ENCODE measurements at regions of chr9 and their contacts with region 1.

Region 1: DNA sequence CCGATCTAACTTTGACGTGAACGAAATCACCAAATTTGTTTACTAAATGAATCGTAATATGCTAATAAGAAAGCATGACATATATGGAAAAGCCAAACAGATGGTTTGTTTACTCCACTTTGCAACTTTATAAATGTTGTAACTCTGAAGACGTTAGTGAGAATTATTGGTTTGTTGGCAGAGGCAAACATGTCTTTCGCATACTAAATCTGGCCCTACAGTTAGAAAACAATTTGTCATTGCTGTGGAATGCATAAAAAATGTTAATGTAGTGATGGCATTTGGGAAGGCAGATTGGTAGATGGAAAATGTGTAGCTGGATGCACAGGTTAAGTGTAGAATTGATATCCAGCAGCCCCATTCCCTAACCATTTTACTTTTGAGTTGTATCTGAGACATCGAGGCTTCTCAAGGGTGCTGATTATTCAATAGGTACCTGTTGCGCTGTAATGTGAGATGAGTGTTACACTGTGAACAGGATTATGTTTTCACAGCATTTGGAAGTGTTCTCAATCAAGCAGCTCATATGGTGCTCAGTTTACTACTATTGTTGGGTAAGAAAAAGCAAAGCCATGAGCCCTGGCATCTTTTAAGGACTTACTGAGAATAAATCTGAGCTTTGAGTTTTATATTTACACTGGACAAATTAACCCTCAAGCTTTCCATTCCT is 444.8 kb downstream of the BNC2 start:
- DNase-seq: no peak
- H3K4me3 ChIP-seq: no peak overlapping the region
- CTCF ChIP-seq: no peak

Region 2: DNA sequence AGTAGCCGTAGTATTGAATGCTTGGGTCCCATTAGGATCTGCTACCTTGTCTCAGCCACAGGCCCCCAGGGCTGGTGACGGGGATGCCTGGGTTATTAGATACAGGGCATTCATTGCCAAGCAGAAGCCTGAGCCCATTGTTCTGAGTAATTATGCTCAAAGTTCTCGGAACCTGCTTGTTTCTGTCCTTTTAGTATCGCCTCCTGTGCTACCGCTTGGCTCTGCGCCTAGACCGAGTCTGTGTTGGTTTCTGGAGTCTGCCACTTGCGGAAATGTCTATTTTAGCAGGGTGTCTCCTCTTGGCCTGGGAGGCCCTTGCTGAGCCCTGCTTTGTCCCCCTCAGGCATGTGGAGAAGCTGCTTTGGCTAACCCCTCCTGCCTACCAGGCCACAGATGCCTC is 61.4 kb before region 1 on chr9:
- in situ Hi-C with region 1: loop called (anchors 5 kb)
- DNase-seq: no peak
- H3K4me3 ChIP-seq: no peak overlapping the region
- CTCF ChIP-seq: no peak

Region 3: GRCh38 chr9:16540743-16541613 is 115.3 kb after region 1 on chr9:
- in situ Hi-C with region 1: loop called (anchors 10 kb)
- DNase-seq: peak; percentile 49
- H3K4me3 ChIP-seq: no peak overlapping the region
- CTCF ChIP-seq: no peak

Region 4: DNA sequence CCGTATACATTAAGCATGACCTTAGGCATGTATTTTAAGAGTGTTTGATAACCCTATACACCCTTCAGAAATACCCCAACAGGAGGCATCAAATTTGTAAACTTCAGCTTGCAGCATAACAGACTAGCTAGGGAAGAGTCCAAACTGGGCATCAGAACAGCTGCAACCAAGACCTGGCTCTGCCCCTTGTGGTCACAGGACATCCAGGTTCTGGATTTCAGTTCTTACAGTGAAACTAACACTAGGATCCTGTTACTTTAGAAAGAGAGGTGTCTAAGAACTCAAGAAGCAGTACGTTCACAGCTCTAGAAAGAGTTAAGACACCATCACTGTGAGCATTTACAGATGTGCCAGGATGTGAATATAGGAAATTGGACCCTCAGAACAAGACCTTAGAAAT is 215.0 kb after region 1 on chr9:
- in situ Hi-C with region 1: no loop called
- DNase-seq: no peak
- H3K4me3 ChIP-seq: no peak overlapping the region
- CTCF ChIP-seq: peak; percentile 40

Measured in astrocyte of the cerebellum (primary cell).